ENCODE measurements at regions of chr10 and their contacts with region 1.

Region 1: GRCh38 chr10:35635576-35635975 is 6.5 kb downstream of the FZD8 start:
- DNase-seq: peak; percentile 43 to 77
- ATAC-seq: peak; percentile 58 to 81; a peak in 5 of 6 replicates
- H3K4me3 ChIP-seq: no peak overlapping the region
- H3K27ac ChIP-seq: peak overlapping the region; percentile 5 to 24; a peak in 3 of 6 replicates
- H3K4me1 ChIP-seq: peaks cover 25% of the 10 kb centered on the region
- CTCF ChIP-seq: peak; percentile 89
- EP300 ChIP-seq: no peak
- POLR2A ChIP-seq: no peak
- RAD21 ChIP-seq: peak; percentile 96

Region 2: DNA sequence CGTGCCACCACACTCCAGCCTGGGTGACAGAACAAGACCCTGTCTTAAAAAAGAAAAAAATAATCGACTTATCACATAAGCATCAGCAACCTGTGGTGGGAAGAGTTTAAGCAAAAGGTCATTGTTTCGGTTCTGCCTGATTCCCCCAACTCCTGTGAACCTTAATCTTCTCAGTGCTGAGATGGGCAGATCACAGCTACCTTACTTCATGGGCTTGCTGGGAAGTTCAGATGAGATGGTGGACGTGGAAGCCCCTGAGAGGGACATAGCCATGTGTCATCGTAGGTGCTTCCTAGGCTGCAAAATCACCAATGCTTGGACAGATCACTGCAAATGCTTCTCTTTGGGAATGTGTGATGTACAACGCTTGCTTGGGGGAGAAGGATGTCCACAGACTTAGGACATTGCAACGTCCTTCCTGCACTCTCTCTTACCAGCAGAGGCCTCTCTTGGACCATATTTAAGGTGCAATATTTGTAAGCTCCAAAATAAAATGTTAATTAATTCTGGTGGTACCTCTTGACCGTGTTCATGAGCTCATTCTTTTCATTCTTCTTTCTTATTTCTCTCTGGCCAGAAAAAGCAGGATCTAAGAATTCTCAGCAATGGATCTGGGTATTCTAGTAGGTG is 21.9 kb before region 1 on chr10:
- CTCF ChIA-PET with region 1: interaction called, 26 read pairs
- POLR2A ChIA-PET with region 1: interaction called, 3 read pairs
- DNase-seq: peak; percentile 22 to 46
- ATAC-seq: peak; percentile 88 to 91; a peak in 5 of 6 replicates
- H3K4me3 ChIP-seq: no peak overlapping the region
- H3K27ac ChIP-seq: no peak overlapping the region
- H3K4me1 ChIP-seq: no peaks in the 10 kb centered on the region
- CTCF ChIP-seq: peak; percentile 60
- EP300 ChIP-seq: no peak
- POLR2A ChIP-seq: no peak
- RAD21 ChIP-seq: peak; percentile 72 to 75

Region 3: GRCh38 chr10:36725581-36726520 is 1090.3 kb after region 1 on chr10:
- CTCF ChIA-PET with region 1: interaction called, 31 read pairs
- POLR2A ChIA-PET with region 1: interaction called, 4 read pairs
- DNase-seq: peak; percentile 44 to 86
- ATAC-seq: peak; percentile 98 to 100
- H3K4me3 ChIP-seq: no peak overlapping the region
- H3K27ac ChIP-seq: peak overlapping the region; percentile 49 to 69; a peak in 5 of 6 replicates
- H3K4me1 ChIP-seq: peaks cover 24% of the 10 kb centered on the region
- CTCF ChIP-seq: peak; percentile 64
- EP300 ChIP-seq: peak; percentile 21 to 45; a peak in 1 of 5 replicates
- POLR2A ChIP-seq: no peak
- RAD21 ChIP-seq: peak; percentile 89

Region 4: DNA sequence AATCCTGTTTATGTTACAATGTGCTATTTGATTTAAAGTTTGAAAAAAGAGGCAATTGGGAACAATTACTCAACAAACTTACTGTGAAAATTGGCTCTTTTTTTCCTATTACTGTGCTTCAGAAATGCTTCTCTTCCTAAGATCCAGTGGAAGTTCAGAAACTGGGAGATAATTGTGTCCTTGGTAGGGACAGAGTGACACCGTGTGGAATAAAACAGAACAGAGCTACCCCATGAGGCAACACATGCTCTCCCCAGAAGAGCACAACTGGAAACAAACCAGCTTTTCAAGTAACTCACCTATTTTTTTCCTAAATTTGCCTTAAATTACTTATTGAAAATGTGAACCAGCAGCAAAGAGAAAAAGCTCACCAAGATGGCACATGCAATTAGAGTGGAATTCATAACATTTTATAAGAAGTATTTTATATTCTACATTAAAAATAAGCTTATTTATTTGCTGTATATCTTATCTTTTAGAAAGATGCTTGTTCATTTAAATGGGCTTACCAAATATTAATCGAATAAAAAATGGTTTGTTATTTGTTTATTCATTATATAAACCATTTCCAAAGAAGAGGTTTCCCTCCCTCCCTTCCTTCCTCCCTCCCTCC is 1143.8 kb after region 1 on chr10:
- CTCF ChIA-PET with region 1: interaction called, 105 read pairs
- POLR2A ChIA-PET with region 1: interaction called, 4 read pairs
- DNase-seq: peak; percentile 47 to 70
- ATAC-seq: peak; percentile 90 to 94
- H3K4me3 ChIP-seq: no peak overlapping the region
- H3K27ac ChIP-seq: 0 out of 6 replicates have a peak overlapping the region, but pooled peaks of 1 of the 2 experiments have one; percentile 22
- H3K4me1 ChIP-seq: peaks cover 10% of the 10 kb centered on the region; the same call in 2 of the 3 replicates
- CTCF ChIP-seq: peak; percentile 85
- EP300 ChIP-seq: no peak
- POLR2A ChIP-seq: no peak
- RAD21 ChIP-seq: peak; percentile 94 to 95

Region 5: GRCh38 chr10:36788152-36788551 is 1152.6 kb after region 1 on chr10:
- CTCF ChIA-PET with region 1: interaction called, 105 read pairs
- POLR2A ChIA-PET with region 1: no interaction called
- DNase-seq: no peak
- ATAC-seq: no peak
- H3K4me3 ChIP-seq: no peak overlapping the region
- H3K27ac ChIP-seq: no peak overlapping the region
- H3K4me1 ChIP-seq: no peaks in the 10 kb centered on the region
- CTCF ChIP-seq: no peak
- EP300 ChIP-seq: no peak
- POLR2A ChIP-seq: no peak
- RAD21 ChIP-seq: no peak

Region 6: DNA sequence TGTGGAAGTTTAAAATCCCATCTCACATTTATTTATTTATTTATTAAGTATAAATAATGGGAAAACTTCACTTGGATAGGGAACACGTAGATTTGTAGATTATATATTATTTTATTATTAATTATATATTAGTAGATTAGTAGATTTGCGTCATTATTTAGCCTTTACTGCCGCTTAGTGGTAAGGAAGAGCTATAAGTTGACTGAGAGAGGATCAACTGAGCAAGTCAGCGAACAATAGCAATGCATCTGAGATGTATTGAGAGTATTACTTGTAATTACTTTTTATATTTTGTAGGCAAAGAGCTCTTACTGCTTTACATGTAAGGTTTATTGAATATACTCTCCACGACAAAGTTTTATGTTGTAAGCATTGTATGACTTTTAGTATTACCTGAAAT is 1245.3 kb after region 1 on chr10:
- CTCF ChIA-PET with region 1: interaction called, 33 read pairs
- POLR2A ChIA-PET with region 1: no interaction called
- DNase-seq: peak; percentile 6 to 45
- ATAC-seq: peak in 1 of 2 experiments; percentile 66; a peak in 2 of 6 replicates
- H3K4me3 ChIP-seq: no peak overlapping the region
- H3K27ac ChIP-seq: no peak overlapping the region
- H3K4me1 ChIP-seq: no peaks in the 10 kb centered on the region
- CTCF ChIP-seq: peak; percentile 71
- EP300 ChIP-seq: no peak
- POLR2A ChIP-seq: no peak
- RAD21 ChIP-seq: peak; percentile 68 to 85